ENCODE measurements at regions of chr3 and their contacts with region 1.

Region 1: GRCh38 chr3:183490670-183491069 is 62.3 kb upstream of the MCF2L2 start:
- DNase-seq: no peak
- H3K4me3 ChIP-seq: no peak overlapping the region
- H3K27ac ChIP-seq: no peak overlapping the region
- H3K4me1 ChIP-seq: no peaks in the 10 kb centered on the region
- H3K27me3 ChIP-seq: no peaks in the 10 kb centered on the region
- CTCF ChIP-seq: no peak
- EP300 ChIP-seq: no peak
- RAD21 ChIP-seq: no peak

Region 2: DNA sequence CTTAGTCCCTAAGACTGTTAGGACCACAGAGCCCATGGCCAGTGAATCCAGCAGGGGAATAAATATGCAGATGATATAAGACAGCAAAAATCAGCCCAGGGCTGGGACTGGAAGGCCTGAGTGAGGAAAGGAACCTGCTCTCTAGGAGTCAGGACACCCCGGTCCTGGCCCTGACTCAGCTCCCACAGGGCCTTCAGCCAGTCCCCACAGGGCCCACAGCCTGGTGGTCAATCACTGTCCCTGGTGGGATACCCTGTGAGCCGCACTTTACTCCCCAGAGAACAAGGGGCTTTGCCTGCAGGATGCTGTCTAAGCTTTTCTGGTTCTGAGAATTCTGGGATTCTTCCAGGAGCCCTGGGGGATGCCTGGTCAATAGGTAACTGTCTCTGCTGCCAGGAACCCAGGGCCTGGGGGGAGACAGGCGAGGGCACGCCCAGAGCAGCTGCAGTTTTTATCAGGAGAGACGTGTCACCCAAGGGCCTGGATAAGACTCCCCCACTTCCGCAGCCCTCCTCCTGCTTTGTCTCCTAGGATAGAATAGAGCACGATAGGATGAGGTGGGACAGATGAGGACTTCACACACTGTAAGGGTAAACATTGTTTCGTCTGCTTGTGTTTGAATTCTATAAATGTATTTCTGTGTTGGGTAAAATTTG is 12.7 kb before region 1 on chr3:
- CTCF ChIA-PET with region 1: interaction called, 16 read pairs
- POLR2A ChIA-PET with region 1: no interaction called
- DNase-seq: no peak
- H3K4me3 ChIP-seq: no peak overlapping the region
- H3K27ac ChIP-seq: no peak overlapping the region
- H3K4me1 ChIP-seq: peaks cover 0 to 8% of the 10 kb centered on the region in 2 experiments; a peak in 1 of 4 replicates
- H3K27me3 ChIP-seq: no peaks in the 10 kb centered on the region; the same call in 1 of the 2 replicates
- CTCF ChIP-seq: no peak
- EP300 ChIP-seq: no peak
- RAD21 ChIP-seq: no peak

Region 3: DNA sequence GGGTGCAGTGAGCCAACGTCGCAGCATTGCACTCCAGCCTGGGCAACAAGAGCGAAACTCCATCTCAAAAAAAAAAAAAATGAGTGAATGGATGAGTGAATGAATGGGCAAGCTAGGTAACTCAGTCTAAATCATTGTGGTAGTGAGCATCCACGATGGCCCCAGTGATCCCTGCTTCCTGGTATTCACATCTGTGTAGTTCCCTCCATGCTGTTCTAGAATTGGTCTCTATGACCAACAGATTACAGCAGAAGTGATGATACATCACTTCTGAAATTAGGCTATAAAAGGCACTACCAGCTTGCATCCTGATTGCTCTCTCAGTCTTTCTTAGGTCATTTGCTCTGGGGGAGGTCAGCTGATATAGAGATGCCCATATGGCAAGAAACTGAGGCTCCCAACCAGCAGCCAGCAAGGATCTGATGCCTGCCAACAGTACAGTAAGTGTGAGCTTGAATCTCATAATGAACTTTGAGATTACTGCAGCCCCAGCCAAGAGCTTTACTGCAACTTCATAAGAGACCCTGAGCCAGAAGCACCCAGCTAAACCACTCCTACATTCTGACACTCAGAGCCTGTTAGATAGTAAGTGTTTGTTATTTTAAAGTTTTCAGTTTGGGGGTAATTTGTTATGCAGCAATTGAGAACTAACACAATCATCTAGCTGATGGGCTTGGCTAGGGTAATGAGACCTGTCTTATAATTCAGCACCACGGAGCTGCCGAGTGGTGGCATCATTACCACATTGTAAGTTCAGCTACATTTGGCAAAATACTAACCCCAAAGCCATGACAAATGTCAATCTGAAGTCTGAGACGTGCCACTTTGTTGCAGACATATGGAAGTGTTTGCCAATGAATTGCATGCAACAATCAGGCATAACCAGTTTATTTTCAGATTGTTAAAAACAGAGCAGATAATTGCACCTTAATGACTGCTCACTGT is 11.8 kb after region 1 on chr3:
- CTCF ChIA-PET with region 1: interaction called, 10 read pairs
- POLR2A ChIA-PET with region 1: no interaction called
- DNase-seq: peak; percentile 44
- H3K4me3 ChIP-seq: no peak overlapping the region
- H3K27ac ChIP-seq: no peak overlapping the region
- H3K4me1 ChIP-seq: no peaks in the 10 kb centered on the region
- H3K27me3 ChIP-seq: no peaks in the 10 kb centered on the region; the same call in none of the 2 replicates
- CTCF ChIP-seq: peak; percentile 44
- EP300 ChIP-seq: no peak
- RAD21 ChIP-seq: peak; percentile 75

Measured in SK-N-SH (cell line).